Gastrocnemius medialis (tissue), 4 donors: ENCODE measurements at regions of chr3 and their contacts with region 1.

Region 1: GRCh38 chr3:24196526-24196925 is 251.4 kb downstream of the NR1D2 start:
- DNase-seq: no peak
- ATAC-seq: no peak
- H3K4me3 ChIP-seq: no peak overlapping the region
- H3K27ac ChIP-seq: peak overlapping the region; percentile 82 to 88 (median 86)
- H3K4me1 ChIP-seq: peaks cover 51 to 73% of the 10 kb centered on the region in 2 donors
- H3K27me3 ChIP-seq: no peaks in the 10 kb centered on the region
- CTCF ChIP-seq: no peak
- POLR2A ChIP-seq: no peak

Region 2: GRCh38 chr3:24545913-24546312 is 349.4 kb after region 1 on chr3:
- in situ Hi-C with region 1: no loop called
- intact Hi-C with region 1: loop called (anchors 5 kb)
- DNase-seq: peak; percentile 78 to 83
- ATAC-seq: peak; percentile 100
- H3K4me3 ChIP-seq: no peak overlapping the region
- H3K27ac ChIP-seq: peak overlapping the region; percentile 63 to 74 (median 70)
- H3K4me1 ChIP-seq: peaks cover 36 to 40% of the 10 kb centered on the region in 2 donors
- H3K27me3 ChIP-seq: no peaks in the 10 kb centered on the region
- CTCF ChIP-seq: no peak
- POLR2A ChIP-seq: no peak